WTC11 (cell line): ENCODE measurements at regions of chr9 and their contacts with region 1.

Region 1: GRCh38 chr9:95127249-95128176 is 190.0 kb downstream of the FANCC start:
- DNase-seq: peak; percentile 90
- ATAC-seq: peak; percentile 82
- H3K4me3 Mint-ChIP-seq: peak overlapping the region; percentile 63
- H3K27ac Mint-ChIP-seq: no peak overlapping the region
- H3K4me1 Mint-ChIP-seq: peaks cover 70% of the 10 kb centered on the region
- H3K27me3 Mint-ChIP-seq: no peaks in the 10 kb centered on the region
- CTCF ChIP-seq: peak; percentile 87

Region 2: DNA sequence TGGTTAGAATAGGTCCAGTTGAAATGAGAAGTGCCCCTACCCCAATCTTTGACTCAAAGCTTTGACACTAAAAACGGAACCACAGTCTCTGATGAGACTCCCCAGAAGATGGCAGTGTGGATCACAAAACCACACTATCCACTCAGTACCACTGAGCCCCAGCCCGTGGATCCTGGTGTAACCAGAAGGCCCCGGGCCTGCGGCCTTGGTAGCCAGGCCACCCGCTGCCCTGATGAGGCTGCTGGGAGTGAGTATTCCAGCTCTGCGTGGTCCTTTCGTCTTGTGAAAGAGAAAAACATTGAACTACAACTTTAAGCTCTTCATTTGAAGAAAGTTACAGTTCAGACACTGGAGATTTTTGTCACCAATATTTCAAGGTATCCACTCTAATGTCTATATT is 446.0 kb before region 1 on chr9:
- CTCF ChIA-PET with region 1: interaction called, 32 read pairs
- POLR2A ChIA-PET with region 1: no interaction called
- DNase-seq: peak; percentile 68
- ATAC-seq: peak; percentile 97
- H3K4me3 Mint-ChIP-seq: no peak overlapping the region
- H3K27ac Mint-ChIP-seq: no peak overlapping the region
- H3K4me1 Mint-ChIP-seq: peaks cover 11% of the 10 kb centered on the region
- H3K27me3 Mint-ChIP-seq: peaks cover 5% of the 10 kb centered on the region; the same call in 1 of the 2 replicates
- CTCF ChIP-seq: 0 out of 2 replicates have a peak, but pooled peaks have one; percentile 36

Region 3: GRCh38 chr9:95048225-95049087 is 79.1 kb before region 1 on chr9:
- CTCF ChIA-PET with region 1: interaction called, 22 read pairs
- POLR2A ChIA-PET with region 1: no interaction called
- DNase-seq: peak; percentile 72
- ATAC-seq: peak; percentile 65
- H3K4me3 Mint-ChIP-seq: peak overlapping the region; percentile 81
- H3K27ac Mint-ChIP-seq: no peak overlapping the region
- H3K4me1 Mint-ChIP-seq: peaks cover 59% of the 10 kb centered on the region
- H3K27me3 Mint-ChIP-seq: peaks cover 31% of the 10 kb centered on the region
- CTCF ChIP-seq: no peak

Region 4: DNA sequence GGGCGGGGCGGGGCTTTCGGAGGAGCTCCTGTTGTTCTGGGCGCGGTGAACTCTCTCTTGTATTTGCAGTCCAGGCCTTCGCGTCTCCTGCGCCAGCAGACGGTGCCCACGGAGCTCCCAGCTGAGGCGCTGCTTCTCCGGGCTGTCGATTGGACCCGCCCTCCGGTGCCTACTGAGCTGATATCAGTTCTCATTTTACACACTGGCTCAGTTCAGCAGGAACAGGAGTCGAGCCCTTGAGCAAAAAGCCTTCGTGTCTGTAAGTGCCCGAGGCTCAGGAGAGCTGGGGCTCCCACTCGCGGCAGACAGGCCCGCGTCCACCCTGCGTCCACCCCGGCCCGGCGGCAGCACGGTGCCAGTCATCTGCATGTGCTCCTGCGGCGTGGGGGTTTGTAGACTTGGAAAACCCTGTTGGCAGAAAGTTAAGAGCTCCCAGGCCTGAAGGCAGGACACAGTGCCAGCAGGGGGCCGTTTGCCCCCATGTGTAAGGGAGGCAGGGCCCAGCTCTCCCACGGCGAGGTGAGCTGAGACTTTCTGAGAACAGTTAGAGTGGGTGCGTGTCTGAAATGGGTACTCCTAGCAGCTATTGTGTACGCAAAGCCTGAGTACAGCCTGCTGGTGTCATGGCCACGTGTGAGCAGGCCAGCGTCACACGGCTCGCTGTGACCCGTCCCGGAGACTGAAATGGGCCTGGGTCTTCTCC is 41.5 kb before region 1 on chr9:
- CTCF ChIA-PET with region 1: interaction called, 32 read pairs
- POLR2A ChIA-PET with region 1: no interaction called
- DNase-seq: no peak
- ATAC-seq: no peak
- H3K4me3 Mint-ChIP-seq: no peak overlapping the region
- H3K27ac Mint-ChIP-seq: peak overlapping the region; percentile 72; the same call in 1 of the 2 replicates
- H3K4me1 Mint-ChIP-seq: 0 out of 2 replicates have a peak, but pooled peaks cover 2% of the 10 kb centered on the region
- H3K27me3 Mint-ChIP-seq: no peaks in the 10 kb centered on the region
- CTCF ChIP-seq: no peak

Region 5: GRCh38 chr9:95116003-95116807 is 11.3 kb before region 1 on chr9:
- CTCF ChIA-PET with region 1: interaction called, 128 read pairs
- POLR2A ChIA-PET with region 1: no interaction called
- DNase-seq: no peak
- ATAC-seq: peak; percentile 83
- H3K4me3 Mint-ChIP-seq: no peak overlapping the region
- H3K27ac Mint-ChIP-seq: no peak overlapping the region
- H3K4me1 Mint-ChIP-seq: peaks cover 10% of the 10 kb centered on the region
- H3K27me3 Mint-ChIP-seq: no peaks in the 10 kb centered on the region
- CTCF ChIP-seq: no peak

Region 6: GRCh38 chr9:95167998-95168397 is 40.5 kb after region 1 on chr9:
- CTCF ChIA-PET with region 1: interaction called, 92 read pairs
- POLR2A ChIA-PET with region 1: no interaction called
- DNase-seq: peak; percentile 77
- ATAC-seq: peak; percentile 96
- H3K4me3 Mint-ChIP-seq: no peak overlapping the region
- H3K27ac Mint-ChIP-seq: peak overlapping the region; percentile 73; the same call in 1 of the 2 replicates
- H3K4me1 Mint-ChIP-seq: peaks cover 18% of the 10 kb centered on the region
- H3K27me3 Mint-ChIP-seq: no peaks in the 10 kb centered on the region
- CTCF ChIP-seq: peak; percentile 93